Activated CD8-positive, alpha-beta memory T cell treated with anti-CD3 and anti-CD28 coated beads, Interleukin-2, amount 10 ng/mL, durations not matched to agents 7 days and 5 days (primary cell): ENCODE measurements at regions of chr12 and their contacts with region 1.

Region 1: GRCh38 chr12:22443379-22444316 is 100.7 kb downstream of the C2CD5 start:
- DNase-seq: peak; percentile 70
- ATAC-seq: peak; percentile 100
- H3K4me3 Mint-ChIP-seq: no peak overlapping the region
- H3K27ac Mint-ChIP-seq: no peak overlapping the region
- H3K4me1 Mint-ChIP-seq: peaks cover 11% of the 10 kb centered on the region
- H3K27me3 Mint-ChIP-seq: no peaks in the 10 kb centered on the region

Region 2: GRCh38 chr12:21697904-21698630 is 745.6 kb before region 1 on chr12:
- CTCF ChIA-PET with region 1: interaction called, 14 read pairs
- DNase-seq: no peak
- ATAC-seq: no peak
- H3K4me3 Mint-ChIP-seq: no peak overlapping the region
- H3K27ac Mint-ChIP-seq: no peak overlapping the region
- H3K4me1 Mint-ChIP-seq: no peaks in the 10 kb centered on the region
- H3K27me3 Mint-ChIP-seq: peaks cover 2% of the 10 kb centered on the region

Region 3: GRCh38 chr12:22100958-22101748 is 342.5 kb before region 1 on chr12:
- CTCF ChIA-PET with region 1: interaction called, 16 read pairs
- DNase-seq: peak; percentile 56
- ATAC-seq: peak; percentile 76
- H3K4me3 Mint-ChIP-seq: no peak overlapping the region
- H3K27ac Mint-ChIP-seq: no peak overlapping the region
- H3K4me1 Mint-ChIP-seq: peaks cover 13% of the 10 kb centered on the region
- H3K27me3 Mint-ChIP-seq: peaks cover 10% of the 10 kb centered on the region

Region 4: DNA sequence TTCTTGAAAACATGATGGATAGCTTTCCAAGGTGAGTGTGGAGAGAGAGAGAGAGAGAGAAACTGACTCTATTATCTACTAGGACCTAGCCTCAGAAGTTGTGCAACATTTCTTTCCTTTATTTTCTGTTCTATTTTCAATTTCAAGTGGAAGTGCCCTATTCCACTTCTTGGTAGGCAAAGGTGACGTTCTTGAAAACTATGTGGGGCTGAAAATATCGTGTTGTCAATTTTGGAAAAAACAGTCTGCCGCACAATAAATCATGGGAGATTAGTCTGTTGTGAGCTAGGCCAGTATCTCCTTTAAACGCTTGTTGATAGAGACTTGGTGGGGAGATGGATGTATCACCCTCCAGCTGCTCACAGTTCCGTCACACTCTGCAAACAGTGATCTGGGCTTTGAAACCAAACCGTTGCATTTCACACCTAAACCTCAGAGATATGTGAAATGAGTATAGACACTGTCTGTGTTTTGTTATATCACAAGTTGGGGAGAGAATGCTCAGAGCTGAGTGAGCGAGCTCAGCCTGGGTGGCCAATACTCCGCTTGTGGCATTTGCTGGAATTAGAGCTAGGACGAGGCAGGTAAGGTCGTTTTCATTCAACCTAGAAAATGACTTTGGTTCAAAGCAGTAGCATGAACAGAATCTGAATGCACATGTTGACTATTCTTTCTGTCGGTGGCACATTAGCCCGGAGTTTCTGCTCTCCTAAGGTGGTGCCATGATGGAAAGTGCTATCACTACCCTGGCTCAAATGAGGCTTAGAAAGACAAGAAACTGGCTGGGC is 34.1 kb before region 1 on chr12:
- CTCF ChIA-PET with region 1: interaction called, 16 read pairs
- DNase-seq: peak; percentile 86
- ATAC-seq: peak; percentile 93
- H3K4me3 Mint-ChIP-seq: peak overlapping the region; percentile 76
- H3K27ac Mint-ChIP-seq: peak overlapping the region; percentile 89
- H3K4me1 Mint-ChIP-seq: peaks cover 42% of the 10 kb centered on the region
- H3K27me3 Mint-ChIP-seq: no peaks in the 10 kb centered on the region